ENCODE measurements at regions of chr17 and their contacts with region 1.

Region 1: GRCh38 chr17:77054936-77055335 is 85.8 kb upstream of the SEC14L1 start:
- DNase-seq: no peak
- H3K4me3 ChIP-seq: no peak overlapping the region
- H3K4me3 Mint-ChIP-seq: no peak overlapping the region
- H3K27ac ChIP-seq: no peak overlapping the region
- H3K27ac Mint-ChIP-seq: no peak overlapping the region
- H3K4me1 ChIP-seq: no peaks in the 10 kb centered on the region
- H3K4me1 Mint-ChIP-seq: peaks cover 0 to 5% (median 3%) of the 10 kb centered on the region in 4 donors
- H3K27me3 ChIP-seq: no peaks in the 10 kb centered on the region
- H3K27me3 Mint-ChIP-seq: peaks cover 12 to 20% of the 10 kb centered on the region in 2 donors

Region 2: GRCh38 chr17:76816590-76817135 is 238.3 kb before region 1 on chr17:
- CTCF ChIA-PET with region 1: interaction called, 13 read pairs
- POLR2A ChIA-PET with region 1: no interaction called
- intact Hi-C with region 1: loop called (anchors 2 kb)
- DNase-seq: peak; percentile 56 to 63 (median 57)
- H3K4me3 ChIP-seq: no peak overlapping the region
- H3K4me3 Mint-ChIP-seq: peak overlapping the region in 2 of 8 donors; percentile 20 to 29
- H3K27ac ChIP-seq: no peak overlapping the region
- H3K27ac Mint-ChIP-seq: peak overlapping the region in 4 of 7 donors; percentile 1 to 54 (median 36)
- H3K4me1 ChIP-seq: peaks cover 7% of the 10 kb centered on the region
- H3K4me1 Mint-ChIP-seq: peaks cover 7 to 9% (median 7%) of the 10 kb centered on the region in 4 donors
- H3K27me3 ChIP-seq: no peaks in the 10 kb centered on the region
- H3K27me3 Mint-ChIP-seq: peaks cover 0 to 2% of the 10 kb centered on the region in 2 donors

Region 3: DNA sequence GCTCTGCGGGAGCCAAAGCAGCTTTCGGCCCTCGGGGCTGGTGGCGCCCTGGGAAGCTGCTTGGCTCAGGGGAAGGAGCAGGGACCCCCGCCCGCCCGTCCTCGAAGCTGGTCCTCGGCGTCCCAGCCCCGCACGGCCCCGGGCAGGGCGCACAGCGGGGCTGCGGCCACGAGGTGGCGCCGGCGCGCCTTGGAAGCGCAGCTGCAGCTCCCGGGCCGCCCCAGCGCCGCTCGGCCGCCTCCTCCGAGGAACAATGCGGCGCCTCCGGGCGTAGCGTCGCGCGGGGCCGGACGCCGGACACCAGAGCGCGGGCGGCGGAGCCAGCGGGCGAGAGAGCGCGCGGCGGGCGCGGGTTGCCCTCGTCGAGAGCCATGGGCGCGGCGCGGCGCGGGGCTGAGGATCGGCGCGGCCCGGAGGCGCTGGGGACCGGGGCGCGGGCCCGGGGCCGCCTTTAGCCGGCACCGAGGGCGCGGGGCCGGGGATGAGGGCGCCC is 186.7 kb before region 1 on chr17 and contains the start of gene MGAT5B:
- CTCF ChIA-PET with region 1: interaction called, 98 read pairs
- POLR2A ChIA-PET with region 1: interaction called, 17 read pairs
- intact Hi-C with region 1: loop called (anchors 1 kb)
- DNase-seq: peak; percentile 52 to 83 (median 74)
- H3K4me3 ChIP-seq: peak within 1 kb of the TSS in 1 of 2 donors; percentile 1
- H3K4me3 Mint-ChIP-seq: peak within 1 kb of the TSS; percentile 53 to 85 (median 74)
- H3K27ac ChIP-seq: no peak within 1 kb of the TSS
- H3K27ac Mint-ChIP-seq: peak within 1 kb of the TSS in 2 of 7 donors; percentile 13 to 87
- H3K4me1 ChIP-seq: peaks cover 11% of the 10 kb centered on the region
- H3K4me1 Mint-ChIP-seq: peaks cover 0 to 12% (median 6%) of the 10 kb centered on the region in 4 donors
- H3K27me3 ChIP-seq: peaks cover 5% of the 10 kb centered on the region
- H3K27me3 Mint-ChIP-seq: peaks cover 6 to 23% of the 10 kb centered on the region in 2 donors
- total RNA-seq, gene MGAT5B: 1.8 to 2.4 TPM

Region 4: GRCh38 chr17:77011173-77012011 is 43.5 kb before region 1 on chr17:
- CTCF ChIA-PET with region 1: interaction called, 38 read pairs
- POLR2A ChIA-PET with region 1: interaction called, 3 read pairs
- intact Hi-C with region 1: loop called (anchors 2 kb)
- DNase-seq: peak; percentile 39 to 54 (median 48)
- H3K4me3 ChIP-seq: no peak overlapping the region
- H3K4me3 Mint-ChIP-seq: no peak overlapping the region
- H3K27ac ChIP-seq: no peak overlapping the region
- H3K27ac Mint-ChIP-seq: no peak overlapping the region
- H3K4me1 ChIP-seq: no peaks in the 10 kb centered on the region
- H3K4me1 Mint-ChIP-seq: peaks cover 0 to 3% (median under 1%) of the 10 kb centered on the region in 4 donors
- H3K27me3 ChIP-seq: no peaks in the 10 kb centered on the region
- H3K27me3 Mint-ChIP-seq: peaks cover 5% of the 10 kb centered on the region in 2 donors

Region 5: DNA sequence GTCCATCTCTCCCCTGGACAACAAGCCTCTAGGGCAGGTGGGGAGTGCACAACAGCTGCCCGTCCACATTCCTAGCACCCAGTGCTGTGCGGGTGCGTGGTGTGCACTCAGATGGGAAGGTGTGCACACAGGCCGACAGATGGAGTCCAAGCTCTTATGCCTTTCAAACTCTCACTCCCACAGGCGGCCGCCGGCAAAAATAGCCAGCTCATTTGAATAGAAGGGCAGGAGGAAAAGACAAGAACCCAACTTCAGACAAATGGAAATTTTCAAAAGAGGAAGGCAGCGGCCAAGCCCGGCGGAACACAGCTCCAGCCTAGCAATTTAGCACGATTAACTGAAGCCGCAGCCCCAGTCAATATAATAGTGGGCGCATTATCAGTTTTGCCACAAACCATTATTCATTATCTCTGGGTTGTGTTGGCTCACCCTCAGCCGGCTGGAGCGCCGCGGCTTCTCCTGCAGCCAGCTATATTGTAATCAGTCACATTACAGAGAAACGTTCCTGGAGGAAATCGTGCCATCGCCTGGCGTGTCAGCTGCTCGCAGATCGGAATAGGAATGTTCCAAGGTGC is 18.0 kb before region 1 on chr17:
- CTCF ChIA-PET with region 1: interaction called, 13 read pairs
- POLR2A ChIA-PET with region 1: no interaction called
- intact Hi-C with region 1: no loop called
- DNase-seq: no peak
- H3K4me3 ChIP-seq: no peak overlapping the region
- H3K4me3 Mint-ChIP-seq: no peak overlapping the region
- H3K27ac ChIP-seq: no peak overlapping the region
- H3K27ac Mint-ChIP-seq: no peak overlapping the region
- H3K4me1 ChIP-seq: no peaks in the 10 kb centered on the region
- H3K4me1 Mint-ChIP-seq: no peaks in the 10 kb centered on the region
- H3K27me3 ChIP-seq: peaks cover 6% of the 10 kb centered on the region
- H3K27me3 Mint-ChIP-seq: peaks cover 4 to 19% of the 10 kb centered on the region in 2 donors

Region 6: GRCh38 chr17:77068915-77069314 is 14.0 kb after region 1 on chr17:
- CTCF ChIA-PET with region 1: interaction called, 13 read pairs
- POLR2A ChIA-PET with region 1: no interaction called
- intact Hi-C with region 1: no loop called
- DNase-seq: no peak
- H3K4me3 ChIP-seq: no peak overlapping the region
- H3K4me3 Mint-ChIP-seq: no peak overlapping the region
- H3K27ac ChIP-seq: no peak overlapping the region
- H3K27ac Mint-ChIP-seq: no peak overlapping the region
- H3K4me1 ChIP-seq: no peaks in the 10 kb centered on the region
- H3K4me1 Mint-ChIP-seq: peaks cover 1 to 5% (median 3%) of the 10 kb centered on the region in 4 donors
- H3K27me3 ChIP-seq: no peaks in the 10 kb centered on the region
- H3K27me3 Mint-ChIP-seq: peaks cover 24 to 32% of the 10 kb centered on the region in 2 donors

Region 7: GRCh38 chr17:77160091-77160874 is 105.3 kb after region 1 on chr17:
- CTCF ChIA-PET with region 1: no interaction called
- POLR2A ChIA-PET with region 1: no interaction called
- intact Hi-C with region 1: no loop called
- DNase-seq: no peak
- H3K4me3 ChIP-seq: no peak overlapping the region
- H3K4me3 Mint-ChIP-seq: no peak overlapping the region
- H3K27ac ChIP-seq: no peak overlapping the region
- H3K27ac Mint-ChIP-seq: peak overlapping the region in 2 of 7 donors; percentile 30 to 66
- H3K4me1 ChIP-seq: peaks cover 37% of the 10 kb centered on the region
- H3K4me1 Mint-ChIP-seq: peaks cover 37 to 65% (median 47%) of the 10 kb centered on the region in 4 donors
- H3K27me3 ChIP-seq: no peaks in the 10 kb centered on the region
- H3K27me3 Mint-ChIP-seq: no peaks in the 10 kb centered on the region